Mammary epithelial cell (primary cell): ENCODE measurements at regions of chr5 and their contacts with region 1.

Region 1: DNA sequence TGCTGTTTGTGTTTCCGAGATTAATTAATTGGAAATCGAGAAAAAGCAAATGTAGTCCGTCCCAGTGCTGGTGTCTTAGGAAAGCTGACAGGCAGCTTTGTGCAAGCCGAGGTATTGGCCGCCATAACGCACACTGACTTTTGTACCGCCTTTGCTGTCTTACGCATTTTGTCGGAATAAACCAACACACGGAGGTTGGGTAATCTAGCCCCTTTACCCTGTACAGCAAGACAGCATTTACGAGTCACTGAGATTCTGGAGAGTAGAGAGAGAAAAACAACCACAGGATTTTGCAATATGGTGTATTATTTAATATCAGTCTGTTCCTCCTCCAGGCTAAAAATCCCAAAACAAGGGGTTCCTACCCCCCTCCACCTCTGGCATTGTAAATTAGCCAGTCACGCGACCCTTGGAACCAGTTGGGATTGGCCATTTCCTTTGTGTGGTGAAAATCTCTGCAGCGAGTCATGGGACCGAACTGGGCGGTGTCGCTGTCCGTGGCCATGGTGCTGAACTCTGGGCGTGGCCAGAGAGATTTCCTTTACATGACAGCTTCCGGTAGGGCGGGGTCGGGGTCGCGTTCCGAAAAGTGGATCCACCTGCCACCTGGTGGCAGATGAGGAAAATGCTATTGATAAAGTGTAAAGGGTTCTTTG is 10.3 kb upstream of the PCDHB1 start:
- DNase-seq: peak; percentile 89
- H3K4me3 ChIP-seq: peak overlapping the region; percentile 42 to 53 (median 48)
- H3K27ac ChIP-seq: no peak overlapping the region
- H3K4me1 ChIP-seq: peaks cover 12% of the 10 kb centered on the region
- H3K27me3 ChIP-seq: no peaks in the 10 kb centered on the region
- CTCF ChIP-seq: peak; percentile 55 to 81

Region 2: GRCh38 chr5:140806834-140807775 is 233.8 kb before region 1 on chr5 and contains the start of gene PCDHA4:
- CTCF ChIA-PET with region 1: no interaction called
- dilution Hi-C with region 1: no loop called
- in situ Hi-C with region 1: no loop called
- intact Hi-C with region 1: loop called (anchors 1 kb)
- DNase-seq: peak; percentile 42
- H3K4me3 ChIP-seq: no peak within 1 kb of the TSS
- H3K27ac ChIP-seq: no peak within 1 kb of the TSS
- H3K4me1 ChIP-seq: no peaks in the 10 kb centered on the region
- H3K27me3 ChIP-seq: no peaks in the 10 kb centered on the region
- CTCF ChIP-seq: peak in 1 of 2 donors; percentile 11
- total RNA-seq, gene PCDHA4: 0.45 to 0.83 TPM

Region 3: GRCh38 chr5:140868721-140869554 is 172.0 kb before region 1 on chr5 and contains the start of gene PCDHA11:
- CTCF ChIA-PET with region 1: interaction called, 11 read pairs
- dilution Hi-C with region 1: no loop called
- in situ Hi-C with region 1: no loop called
- intact Hi-C with region 1: loop called (anchors 1 kb)
- DNase-seq: no peak
- H3K4me3 ChIP-seq: peak within 1 kb of the TSS; percentile 41 to 51 (median 43)
- H3K27ac ChIP-seq: no peak within 1 kb of the TSS
- H3K4me1 ChIP-seq: no peaks in the 10 kb centered on the region
- H3K27me3 ChIP-seq: peaks cover 2% of the 10 kb centered on the region
- CTCF ChIP-seq: peak; percentile 48 to 61
- total RNA-seq, gene PCDHA11: 0.21 to 2.0 TPM

Region 4: GRCh38 chr5:140882591-140882899 is 158.4 kb before region 1 on chr5:
- CTCF ChIA-PET with region 1: interaction called, 7 read pairs
- dilution Hi-C with region 1: no loop called
- in situ Hi-C with region 1: loop called (anchors 5 kb)
- intact Hi-C with region 1: loop called (anchors 1 kb)
- DNase-seq: peak; percentile 49
- H3K4me3 ChIP-seq: no peak overlapping the region
- H3K27ac ChIP-seq: no peak overlapping the region
- H3K4me1 ChIP-seq: no peaks in the 10 kb centered on the region
- H3K27me3 ChIP-seq: no peaks in the 10 kb centered on the region
- CTCF ChIP-seq: peak in 1 of 2 donors; percentile 40

Region 5: DNA sequence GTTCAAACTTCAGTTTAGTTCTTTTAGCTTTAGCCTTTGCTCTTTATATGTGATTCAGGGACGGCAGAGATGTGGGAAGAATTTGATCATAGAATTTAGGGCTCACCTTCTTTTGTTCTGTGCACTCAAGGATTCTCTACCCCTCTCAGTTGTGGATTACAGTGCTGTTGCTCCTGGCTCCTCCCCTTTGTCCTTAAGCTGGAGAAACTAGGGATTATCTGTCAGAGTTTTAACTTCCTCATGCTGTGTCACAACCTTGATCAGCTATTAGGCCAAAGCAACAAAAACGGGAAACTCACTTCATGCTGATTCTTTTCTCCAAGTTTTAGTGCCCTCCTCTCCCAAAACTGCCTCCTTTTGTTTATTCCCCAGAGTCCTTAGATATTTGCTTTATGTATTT is 87.7 kb before region 1 on chr5:
- CTCF ChIA-PET with region 1: no interaction called
- dilution Hi-C with region 1: no loop called
- in situ Hi-C with region 1: no loop called
- intact Hi-C with region 1: no loop called
- DNase-seq: no peak
- H3K4me3 ChIP-seq: no peak overlapping the region
- H3K27ac ChIP-seq: no peak overlapping the region
- H3K4me1 ChIP-seq: peaks cover 2% of the 10 kb centered on the region
- H3K27me3 ChIP-seq: no peaks in the 10 kb centered on the region
- CTCF ChIP-seq: no peak

Region 6: DNA sequence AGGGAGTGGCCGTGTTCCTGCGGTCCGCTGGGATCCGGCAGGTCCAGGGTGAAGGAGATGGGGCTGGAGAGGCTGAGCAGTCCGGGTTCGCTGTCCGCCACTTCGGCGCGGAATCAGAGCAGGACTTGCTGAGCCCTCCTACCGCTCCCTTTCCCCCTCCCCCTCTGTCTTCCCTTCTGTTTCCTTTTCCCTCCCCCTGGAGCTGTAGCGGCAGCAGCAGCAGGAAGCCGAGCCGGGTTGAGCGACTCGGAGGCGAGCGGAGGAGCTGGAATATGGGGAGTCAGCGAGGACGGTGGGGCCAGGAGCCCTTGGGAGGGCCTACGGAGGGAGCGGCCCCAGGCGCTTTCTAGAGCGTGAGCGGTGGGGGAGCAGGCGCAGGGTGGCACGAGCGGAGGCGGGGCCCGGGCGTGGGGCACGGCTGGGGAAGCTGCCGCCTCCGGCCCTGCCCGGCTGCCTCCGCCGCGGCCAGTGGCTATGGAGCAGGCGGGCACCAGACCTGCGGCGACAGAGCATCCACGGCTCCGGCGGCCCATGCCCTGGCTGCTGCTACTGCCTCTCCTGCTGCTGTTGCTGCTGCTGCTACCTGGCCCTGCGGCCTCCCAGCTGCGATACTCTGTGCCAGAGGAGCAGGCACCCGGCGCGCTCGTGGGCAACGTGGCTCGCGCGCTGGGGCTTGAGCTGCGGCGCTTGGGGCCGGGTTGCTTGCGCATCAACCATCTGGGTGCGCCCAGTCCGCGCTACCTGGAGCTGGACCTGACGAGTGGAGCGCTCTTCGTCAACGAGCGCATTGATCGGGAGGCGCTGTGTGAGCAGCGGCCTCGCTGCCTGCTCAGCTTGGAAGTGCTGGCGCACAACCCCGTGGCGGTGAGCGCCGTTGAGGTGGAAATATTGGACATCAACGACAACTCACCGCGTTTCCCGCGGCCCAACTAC is 74.3 kb before region 1 on chr5 and contains the start of gene PCDHAC2:
- CTCF ChIA-PET with region 1: interaction called, 5 read pairs
- dilution Hi-C with region 1: no loop called
- in situ Hi-C with region 1: no loop called
- intact Hi-C with region 1: loop called (anchors 2 kb)
- DNase-seq: peak; percentile 68
- H3K4me3 ChIP-seq: peak within 1 kb of the TSS; percentile 65 to 74 (median 68)
- H3K27ac ChIP-seq: no peak within 1 kb of the TSS
- H3K4me1 ChIP-seq: peaks cover 10% of the 10 kb centered on the region
- H3K27me3 ChIP-seq: no peaks in the 10 kb centered on the region
- CTCF ChIP-seq: no peak
- total RNA-seq, gene PCDHAC2: 3.7 to 5.8 TPM